ENCODE measurements at regions of chr1 and their contacts with region 1.

Region 1: GRCh38 chr1:81834921-81835698 is 34.4 kb downstream of the ADGRL2 start:
- DNase-seq: no peak
- H3K4me3 ChIP-seq: peak overlapping the region in 3 of 4 donors; percentile 5 to 24 (median 10)
- H3K27ac ChIP-seq: peak overlapping the region in 3 of 4 donors; percentile 2 to 10 (median 5)
- H3K4me1 ChIP-seq: peaks cover 37 to 52% (median 49%) of the 10 kb centered on the region in 4 donors
- H3K27me3 ChIP-seq: no peaks in the 10 kb centered on the region
- CTCF ChIP-seq: no peak
- EP300 ChIP-seq: no peak
- POLR2A ChIP-seq: no peak

Region 2: GRCh38 chr1:81920245-81920740 is 85.2 kb after region 1 on chr1:
- intact Hi-C with region 1: loop called (anchors 10 kb)
- DNase-seq: no peak
- H3K4me3 ChIP-seq: peak overlapping the region in 2 of 4 donors; percentile 5 to 17
- H3K27ac ChIP-seq: peak overlapping the region in 1 of 4 donors; percentile 3
- H3K4me1 ChIP-seq: peaks cover 15 to 37% (median 29%) of the 10 kb centered on the region in 4 donors
- H3K27me3 ChIP-seq: no peaks in the 10 kb centered on the region
- CTCF ChIP-seq: no peak
- EP300 ChIP-seq: no peak
- POLR2A ChIP-seq: no peak

Region 3: GRCh38 chr1:82059959-82060358 is 224.8 kb after region 1 on chr1:
- intact Hi-C with region 1: no loop called
- DNase-seq: no peak
- H3K4me3 ChIP-seq: no peak overlapping the region
- H3K27ac ChIP-seq: no peak overlapping the region
- H3K4me1 ChIP-seq: no peaks in the 10 kb centered on the region
- H3K27me3 ChIP-seq: no peaks in the 10 kb centered on the region
- CTCF ChIP-seq: no peak
- EP300 ChIP-seq: no peak
- POLR2A ChIP-seq: no peak

Measured in esophagus muscularis mucosa (tissue), 4 donors.